HepG2 (cell line): ENCODE measurements at regions of chr12 and their contacts with region 1.

Region 1: DNA sequence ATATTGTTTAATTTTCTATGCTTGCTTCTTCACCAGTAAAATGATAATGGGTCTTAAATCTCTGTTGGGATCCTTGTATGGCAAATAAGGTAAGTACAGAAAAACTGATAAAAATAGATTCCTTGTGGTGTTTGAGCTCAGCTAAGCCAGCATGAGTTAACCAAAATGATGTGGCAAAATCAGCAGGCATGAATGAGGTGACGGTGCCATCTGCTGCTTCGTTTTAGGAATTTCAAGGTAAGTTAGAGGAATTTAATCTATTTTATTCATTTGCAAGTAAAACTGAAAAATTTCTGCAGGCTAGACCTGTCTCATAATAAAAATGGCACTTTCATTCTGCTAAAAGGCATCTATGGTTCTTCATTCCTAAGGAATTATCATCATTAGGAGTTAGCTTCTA is 10.0 kb upstream of the CLEC7A start:
- DNase-seq: peak; percentile 35
- ATAC-seq: peak; percentile 29; the same call in 1 of the 3 replicates
- H3K4me3 ChIP-seq: no peak overlapping the region
- H3K27ac ChIP-seq: no peak overlapping the region
- H3K4me1 ChIP-seq: 0 out of 2 replicates have a peak, but pooled peaks cover 6% of the 10 kb centered on the region
- H3K27me3 ChIP-seq: no peaks in the 10 kb centered on the region; a peak in 1 of 5 replicates
- CTCF ChIP-seq: peak; percentile 69
- EP300 ChIP-seq: no peak
- POLR2A ChIP-seq: no peak
- RAD21 ChIP-seq: 0 out of 2 replicates have a peak, but pooled peaks have one; percentile 32

Region 2: DNA sequence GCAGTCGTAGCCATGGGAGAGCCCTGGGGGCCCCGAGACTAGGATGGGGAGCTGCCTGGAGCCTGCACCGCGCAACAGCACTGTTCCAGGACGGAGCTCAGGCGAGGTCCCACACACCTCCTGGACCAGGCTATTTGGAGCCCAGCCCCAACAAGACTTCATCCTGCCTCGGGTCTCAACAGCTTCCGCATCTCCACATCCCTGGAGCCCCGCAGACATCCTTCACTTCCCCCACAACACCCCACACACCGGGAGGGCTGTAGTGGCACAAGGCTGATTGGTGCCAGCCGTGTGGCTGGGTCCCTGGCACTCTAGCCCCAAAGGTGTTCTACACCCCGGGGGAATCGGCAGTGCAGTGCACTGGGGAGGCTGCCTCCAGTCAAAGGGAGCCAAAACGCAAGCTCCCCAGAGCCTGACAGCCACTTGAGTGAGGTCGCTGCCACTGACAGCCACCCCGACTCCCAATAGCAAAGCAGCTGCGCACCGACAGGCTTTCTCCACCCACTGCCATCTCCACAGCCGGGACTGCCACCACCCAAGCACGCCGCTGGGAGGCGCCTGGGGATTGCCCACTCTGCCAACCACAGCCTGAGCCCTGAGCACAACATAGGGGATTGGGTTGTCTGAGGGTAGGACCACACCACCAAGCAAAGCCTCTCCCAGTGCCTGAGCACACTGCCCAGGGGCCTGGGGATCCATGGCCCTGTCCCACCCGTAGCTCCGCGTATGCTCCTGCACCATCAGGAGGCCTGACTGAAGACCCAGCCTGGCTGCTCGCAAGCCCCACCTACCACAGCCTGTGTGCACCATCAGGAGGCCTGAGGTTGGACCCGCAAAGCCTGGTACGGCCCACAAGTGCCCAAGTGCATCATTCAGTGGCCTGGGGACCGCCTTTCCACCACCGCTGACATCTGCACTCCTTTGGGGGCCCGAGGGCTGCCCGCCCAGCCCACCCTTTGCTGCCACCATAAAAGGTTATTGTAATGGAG is 325.9 kb before region 1 on chr12:
- CTCF ChIA-PET with region 1: interaction called, 8 read pairs
- POLR2A ChIA-PET with region 1: no interaction called
- in situ Hi-C with region 1: no loop called
- intact Hi-C with region 1: loop called (anchors 5 kb)
- DNase-seq: peak; percentile 9
- ATAC-seq: peak; percentile 100
- H3K4me3 ChIP-seq: no peak overlapping the region; a peak in 1 of 6 replicates
- H3K27ac ChIP-seq: no peak overlapping the region
- H3K4me1 ChIP-seq: no peaks in the 10 kb centered on the region
- H3K27me3 ChIP-seq: peaks cover 2 to 37% of the 10 kb centered on the region in 2 experiments; a peak in 3 of 5 replicates
- CTCF ChIP-seq: peak; percentile 90
- EP300 ChIP-seq: no peak
- POLR2A ChIP-seq: no peak
- RAD21 ChIP-seq: peak; percentile 79

Region 3: DNA sequence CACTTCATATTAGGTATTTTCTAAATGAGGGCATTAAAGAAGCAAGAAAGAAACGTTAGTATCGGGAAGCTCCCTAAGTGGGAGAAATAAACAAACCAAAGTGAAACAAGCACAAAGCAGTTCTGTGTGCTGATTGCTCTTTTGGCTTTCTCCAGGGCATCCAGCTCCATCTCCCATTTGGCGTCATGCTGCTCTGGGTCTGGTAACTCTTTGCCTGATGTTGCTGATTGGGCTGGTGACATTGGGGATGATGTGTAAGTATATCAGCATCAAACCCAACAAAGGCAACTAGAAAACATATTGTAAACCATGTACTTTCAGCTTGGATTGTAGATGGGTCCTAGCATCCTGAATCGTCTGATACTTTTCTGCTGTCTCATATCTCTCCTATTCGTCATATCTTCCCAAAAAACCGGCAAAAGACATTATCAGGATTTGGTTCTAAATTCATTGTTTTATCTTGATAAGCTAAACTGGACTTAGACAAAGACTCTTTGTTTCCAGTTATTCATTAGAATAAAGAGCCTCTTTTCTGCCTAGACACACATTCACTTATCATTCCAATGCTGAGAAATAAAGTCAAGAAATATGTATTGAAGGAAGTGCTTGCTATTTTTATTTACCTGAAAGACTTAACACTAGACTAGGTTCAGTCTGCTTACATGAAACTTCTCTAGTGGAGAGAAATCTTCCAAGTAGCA is 127.2 kb before region 1 on chr12:
- CTCF ChIA-PET with region 1: interaction called, 6 read pairs
- POLR2A ChIA-PET with region 1: no interaction called
- in situ Hi-C with region 1: no loop called
- intact Hi-C with region 1: loop called (anchors 1 kb)
- DNase-seq: no peak
- ATAC-seq: no peak
- H3K4me3 ChIP-seq: no peak overlapping the region
- H3K27ac ChIP-seq: no peak overlapping the region
- H3K4me1 ChIP-seq: no peaks in the 10 kb centered on the region
- H3K27me3 ChIP-seq: peaks cover 0 to 3% of the 10 kb centered on the region in 2 experiments; a peak in 2 of 5 replicates
- CTCF ChIP-seq: no peak
- EP300 ChIP-seq: no peak
- POLR2A ChIP-seq: no peak
- RAD21 ChIP-seq: no peak

Region 4: DNA sequence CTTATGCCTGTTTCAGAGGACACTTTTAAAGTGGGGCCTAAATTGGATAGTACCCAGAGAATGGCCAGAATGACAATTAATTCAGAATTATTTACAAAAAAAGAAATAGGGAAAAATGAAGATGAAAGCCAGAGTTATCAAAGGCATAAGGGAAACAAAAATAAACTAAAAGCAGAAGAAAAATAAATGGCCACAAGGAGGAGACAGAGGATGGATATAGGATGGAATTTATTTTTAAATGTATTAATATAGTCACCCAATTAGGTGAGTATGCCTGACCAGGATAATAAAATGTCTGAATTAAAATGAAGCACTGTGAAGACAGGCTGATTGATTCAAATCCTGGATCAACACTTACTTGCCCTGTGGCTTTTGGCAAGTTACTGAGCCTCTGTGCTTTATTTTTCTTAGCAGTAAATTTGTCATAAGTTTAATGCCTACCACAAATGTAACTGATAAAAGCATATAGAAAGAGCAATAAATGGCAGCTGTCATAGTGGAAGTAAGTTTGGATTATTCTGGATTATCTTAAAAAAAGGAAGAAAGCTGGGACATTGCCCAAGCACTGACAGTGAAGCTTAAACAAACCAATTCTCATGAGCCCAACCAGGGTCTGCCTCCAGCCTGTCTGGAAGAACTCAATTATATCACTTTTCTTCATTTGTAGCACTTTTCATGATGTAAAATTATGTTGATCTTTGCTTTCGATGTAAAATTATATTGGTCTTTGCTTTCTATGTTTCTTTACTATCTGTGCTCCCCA is 106.0 kb before region 1 on chr12:
- CTCF ChIA-PET with region 1: interaction called, 5 read pairs
- POLR2A ChIA-PET with region 1: no interaction called
- in situ Hi-C with region 1: no loop called
- intact Hi-C with region 1: loop called (anchors 1 kb)
- DNase-seq: no peak
- ATAC-seq: no peak
- H3K4me3 ChIP-seq: no peak overlapping the region
- H3K27ac ChIP-seq: no peak overlapping the region
- H3K4me1 ChIP-seq: no peaks in the 10 kb centered on the region
- H3K27me3 ChIP-seq: peaks cover 0 to 9% of the 10 kb centered on the region in 2 experiments; a peak in 2 of 5 replicates
- CTCF ChIP-seq: no peak
- EP300 ChIP-seq: no peak
- POLR2A ChIP-seq: no peak
- RAD21 ChIP-seq: no peak